Heart left ventricle (tissue), 16 donors: ENCODE measurements at regions of chr3 and their contacts with region 1.

Region 1: GRCh38 chr3:113051302-113051711 is 60.5 kb downstream of the GTPBP8 start:
- DNase-seq: peak; percentile 72 to 83 (median 74)
- ATAC-seq: peak; percentile 91 to 96 (median 95)
- H3K4me3 ChIP-seq: peak overlapping the region in 1 of 12 donors; percentile 27
- H3K27ac ChIP-seq: peak overlapping the region in 2 of 12 donors; percentile 31 to 71
- H3K4me1 ChIP-seq: peaks cover 0 to 31% (median 5%) of the 10 kb centered on the region in 12 donors
- H3K27me3 ChIP-seq: no peaks in the 10 kb centered on the region
- CTCF ChIP-seq: peak; percentile 87 to 98 (median 96)
- POLR2A ChIP-seq: no peak

Region 2: GRCh38 chr3:113136071-113136470 is 84.8 kb after region 1 on chr3:
- intact Hi-C with region 1: loop called in 6 of 10 experiments (anchors 2 to 10 kb)
- DNase-seq: no peak
- ATAC-seq: peak in 2 of 4 donors; percentile 28 to 31
- H3K4me3 ChIP-seq: no peak overlapping the region
- H3K27ac ChIP-seq: no peak overlapping the region
- H3K4me1 ChIP-seq: no peaks in the 10 kb centered on the region
- H3K27me3 ChIP-seq: no peaks in the 10 kb centered on the region
- CTCF ChIP-seq: peak; percentile 39 to 71 (median 54)
- POLR2A ChIP-seq: no peak

Region 3: DNA sequence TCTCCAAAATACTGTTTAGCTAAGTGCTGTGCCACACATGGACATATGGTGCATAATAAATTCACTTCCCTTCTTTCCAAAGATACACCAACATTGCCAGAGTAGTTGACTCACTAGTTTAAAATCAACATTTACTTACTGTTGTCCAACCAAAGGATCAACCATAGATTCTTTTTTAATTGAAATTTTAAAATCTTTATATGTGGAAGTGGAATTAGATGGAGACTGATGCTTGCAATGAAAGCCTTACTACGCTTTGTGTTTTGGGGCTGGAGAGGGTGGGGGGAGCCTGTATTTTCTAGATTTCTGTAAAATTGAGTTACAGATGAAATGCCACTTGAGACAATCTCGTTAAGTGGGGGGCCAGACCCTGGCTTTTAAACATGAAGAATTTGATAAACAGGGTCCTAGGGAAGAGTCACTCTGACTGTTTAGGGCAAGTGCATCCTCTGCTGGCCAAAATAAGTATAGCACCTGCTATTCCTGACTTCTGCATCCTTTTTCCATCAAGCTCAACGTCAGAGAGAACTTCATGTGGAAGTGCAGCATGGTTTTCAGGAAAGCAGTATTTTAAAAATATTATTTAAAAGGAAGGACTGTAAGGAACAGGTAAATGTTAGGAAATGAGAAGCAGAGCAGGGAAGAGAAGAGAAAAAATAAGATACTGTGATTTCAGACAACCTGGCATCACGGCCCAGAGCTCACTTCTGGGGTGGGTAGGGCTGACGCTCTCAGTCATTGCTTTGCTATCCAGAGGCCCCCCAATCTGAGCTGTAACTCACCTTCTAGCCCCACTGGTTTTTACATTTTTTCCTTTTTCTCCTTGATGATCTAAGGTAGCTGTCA is 236.7 kb after region 1 on chr3:
- intact Hi-C with region 1: loop called (anchors 1 to 2 kb)
- DNase-seq: peak in 2 of 5 donors; percentile 45
- ATAC-seq: peak in 3 of 4 donors; percentile 41 to 55 (median 43)
- H3K4me3 ChIP-seq: no peak overlapping the region
- H3K27ac ChIP-seq: peak overlapping the region in 1 of 12 donors; percentile 51
- H3K4me1 ChIP-seq: peaks cover 0 to 8% (median 0%) of the 10 kb centered on the region in 12 donors
- H3K27me3 ChIP-seq: no peaks in the 10 kb centered on the region
- CTCF ChIP-seq: peak; percentile 91 to 100 (median 98)
- POLR2A ChIP-seq: no peak

Region 4: DNA sequence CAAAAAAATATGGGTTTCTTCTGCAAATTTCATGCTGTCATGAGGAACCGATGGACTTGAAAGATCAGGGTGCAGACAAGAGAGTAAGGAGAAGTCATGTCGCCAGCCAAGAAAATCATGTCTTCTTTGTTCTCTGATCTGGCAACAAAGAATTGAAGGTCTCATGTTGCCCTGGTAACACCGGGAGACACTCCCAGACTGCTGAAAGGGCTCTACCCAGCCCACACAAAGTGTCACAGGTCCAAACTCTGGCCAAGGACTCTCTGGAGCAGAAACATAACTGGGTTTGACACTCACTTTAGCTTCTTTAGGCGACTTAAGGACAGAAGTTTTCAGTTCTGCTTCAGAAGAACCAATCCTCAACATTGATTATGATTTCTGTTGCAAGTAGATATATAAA is 523.9 kb after region 1 on chr3:
- intact Hi-C with region 1: loop called in 1 of 10 experiments (anchors 5 kb)
- DNase-seq: no peak
- ATAC-seq: no peak
- H3K4me3 ChIP-seq: no peak overlapping the region
- H3K27ac ChIP-seq: no peak overlapping the region
- H3K4me1 ChIP-seq: peaks cover 0 to 4% (median 0%) of the 10 kb centered on the region in 12 donors
- H3K27me3 ChIP-seq: peaks cover 0 to 6% (median 0%) of the 10 kb centered on the region in 9 donors
- CTCF ChIP-seq: no peak
- POLR2A ChIP-seq: no peak